Activated CD8-positive, alpha-beta T cell treated with anti-CD3 and anti-CD28 coated beads, Interleukin-2, amount 10 ng/mL, durations not matched to agents 7 days and 5 days (primary cell): ENCODE measurements at regions of chr3 and their contacts with region 1.

Region 1: DNA sequence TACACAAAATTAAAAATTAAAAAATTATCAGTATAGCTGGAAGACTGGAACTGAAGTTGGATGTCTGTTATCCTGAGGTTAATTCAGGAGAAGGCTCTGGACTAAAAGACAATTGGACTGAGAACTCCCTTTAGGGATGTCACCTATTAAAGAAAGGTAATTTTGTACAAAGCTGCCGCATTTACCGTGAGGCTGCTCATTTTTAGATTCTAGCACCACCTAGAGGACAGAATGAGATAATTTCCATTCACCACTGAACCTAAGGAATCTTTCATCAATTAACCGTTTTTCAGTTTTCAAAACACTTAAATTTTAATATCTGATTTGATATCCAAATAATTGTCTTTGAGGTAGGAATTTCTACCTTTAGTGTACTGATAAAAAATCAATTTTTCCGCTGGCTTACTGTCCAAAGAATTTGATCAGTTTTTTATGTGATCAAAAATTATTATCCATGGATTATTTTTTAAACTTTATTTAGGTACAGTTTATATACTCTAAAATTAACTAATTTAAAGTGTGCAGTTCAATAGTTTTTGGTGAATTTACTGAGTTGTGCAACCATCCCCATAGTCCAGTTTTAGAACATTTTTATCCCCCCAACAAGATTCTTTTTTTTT is 106.7 kb upstream of the TNIK start:
- DNase-seq: no peak
- ATAC-seq: peak; percentile 72
- H3K4me3 Mint-ChIP-seq: no peak overlapping the region
- H3K27ac Mint-ChIP-seq: no peak overlapping the region
- H3K4me1 Mint-ChIP-seq: peaks cover 17% of the 10 kb centered on the region
- H3K27me3 Mint-ChIP-seq: peaks cover 13% of the 10 kb centered on the region

Region 2: GRCh38 chr3:170961616-170962400 is 605.1 kb before region 1 on chr3:
- CTCF ChIA-PET with region 1: interaction called, 12 read pairs
- POLR2A ChIA-PET with region 1: no interaction called
- DNase-seq: peak; percentile 26
- ATAC-seq: no peak
- H3K4me3 Mint-ChIP-seq: no peak overlapping the region
- H3K27ac Mint-ChIP-seq: no peak overlapping the region
- H3K4me1 Mint-ChIP-seq: no peaks in the 10 kb centered on the region
- H3K27me3 Mint-ChIP-seq: peaks cover 14% of the 10 kb centered on the region

Region 3: GRCh38 chr3:171162986-171163723 is 403.8 kb before region 1 on chr3:
- CTCF ChIA-PET with region 1: interaction called, 35 read pairs
- POLR2A ChIA-PET with region 1: no interaction called
- DNase-seq: peak; percentile 38
- ATAC-seq: no peak
- H3K4me3 Mint-ChIP-seq: no peak overlapping the region
- H3K27ac Mint-ChIP-seq: peak overlapping the region; percentile 56
- H3K4me1 Mint-ChIP-seq: peaks cover 20% of the 10 kb centered on the region
- H3K27me3 Mint-ChIP-seq: no peaks in the 10 kb centered on the region

Region 4: GRCh38 chr3:171269542-171269941 is 297.4 kb before region 1 on chr3:
- CTCF ChIA-PET with region 1: interaction called, 11 read pairs
- POLR2A ChIA-PET with region 1: no interaction called
- DNase-seq: no peak
- ATAC-seq: peak; percentile 71
- H3K4me3 Mint-ChIP-seq: peak overlapping the region; percentile 45
- H3K27ac Mint-ChIP-seq: peak overlapping the region; percentile 53
- H3K4me1 Mint-ChIP-seq: peaks cover 65% of the 10 kb centered on the region
- H3K27me3 Mint-ChIP-seq: no peaks in the 10 kb centered on the region

Region 5: GRCh38 chr3:171459942-171460724 is 106.8 kb before region 1 on chr3 and contains the start of gene TNIK:
- CTCF ChIA-PET with region 1: interaction called, 22 read pairs
- POLR2A ChIA-PET with region 1: interaction called, 3 read pairs
- DNase-seq: peak; percentile 96
- ATAC-seq: peak; percentile 84
- H3K4me3 Mint-ChIP-seq: peak within 1 kb of the TSS; percentile 84
- H3K27ac Mint-ChIP-seq: peak within 1 kb of the TSS; percentile 84
- H3K4me1 Mint-ChIP-seq: peaks cover 39% of the 10 kb centered on the region
- H3K27me3 Mint-ChIP-seq: no peaks in the 10 kb centered on the region
- total RNA-seq, gene TNIK: 32.1 to 39.2 TPM

Region 6: DNA sequence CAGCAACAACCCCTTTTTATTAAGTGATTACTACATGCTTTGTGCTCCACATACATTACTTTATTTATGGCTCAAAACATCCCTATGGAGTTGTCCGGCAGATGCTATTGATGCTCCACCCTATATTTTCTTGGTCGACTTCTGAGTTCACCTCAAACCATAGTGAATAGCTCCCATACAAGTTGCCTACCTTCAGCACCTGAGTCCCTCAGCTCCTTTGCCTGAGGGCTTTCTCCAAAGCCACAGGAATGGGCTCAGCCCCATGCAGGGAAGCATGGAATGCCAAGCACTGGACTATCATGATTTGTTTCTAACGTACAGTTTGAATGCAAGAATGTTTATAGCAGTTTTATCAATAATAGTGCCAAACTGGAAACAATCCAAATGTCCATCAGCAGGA is 18.1 kb after region 1 on chr3:
- CTCF ChIA-PET with region 1: no interaction called
- POLR2A ChIA-PET with region 1: no interaction called
- DNase-seq: no peak
- ATAC-seq: no peak
- H3K4me3 Mint-ChIP-seq: no peak overlapping the region
- H3K27ac Mint-ChIP-seq: no peak overlapping the region
- H3K4me1 Mint-ChIP-seq: no peaks in the 10 kb centered on the region
- H3K27me3 Mint-ChIP-seq: peaks cover 13% of the 10 kb centered on the region